CD4-positive, alpha-beta memory T cell (primary cell): ENCODE measurements at regions of chr20 and their contacts with region 1.

Region 1: DNA sequence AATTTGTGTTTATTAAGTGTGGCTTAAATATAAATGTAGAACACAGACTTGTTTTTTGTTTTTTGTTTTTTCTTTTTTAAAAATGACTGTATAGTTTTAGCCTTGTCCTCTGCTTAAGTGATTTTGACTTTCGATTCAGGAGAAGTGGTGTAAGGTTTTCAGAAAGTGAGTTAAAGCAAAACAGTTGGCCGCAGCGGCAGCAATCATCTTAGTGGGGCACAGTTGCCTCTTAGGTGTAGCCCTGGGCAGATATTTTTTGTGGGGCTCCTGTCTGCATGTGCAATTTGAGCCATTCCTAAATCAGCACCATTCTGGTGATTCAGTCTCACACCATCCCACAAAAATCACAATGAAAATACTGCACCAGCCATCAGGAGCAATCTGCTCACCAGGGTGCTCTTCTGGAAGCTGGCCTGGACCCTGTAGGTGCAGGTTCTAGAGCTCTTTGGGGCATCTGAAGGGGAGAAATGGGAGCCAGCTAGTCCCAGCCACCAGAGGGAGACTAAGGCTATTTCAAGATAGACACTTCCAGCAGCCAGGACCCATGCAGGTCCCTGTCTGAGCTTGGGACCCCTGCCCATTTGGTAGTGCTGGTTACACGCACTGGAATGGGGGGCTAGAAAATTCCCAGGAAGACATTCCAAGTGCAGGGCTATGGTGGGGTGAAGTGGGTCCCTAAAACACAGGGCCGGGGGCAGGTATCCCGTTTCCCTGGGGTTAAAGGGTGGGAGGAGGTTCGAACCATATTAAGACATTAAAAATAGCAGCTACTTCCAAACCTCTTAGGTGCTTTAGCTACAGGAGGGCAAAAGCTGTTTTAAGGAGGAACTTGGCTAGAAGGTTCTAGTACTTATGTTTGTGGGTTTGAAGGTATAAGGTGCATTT is 156.6 kb downstream of the NFATC2 start:
- DNase-seq: peak; percentile 29 to 63 (median 37)
- H3K4me3 ChIP-seq: no peak overlapping the region
- H3K4me3 Mint-ChIP-seq: peak overlapping the region in 4 of 8 donors; percentile 13 to 50 (median 38)
- H3K27ac ChIP-seq: peak overlapping the region; percentile 13
- H3K27ac Mint-ChIP-seq: peak overlapping the region; percentile 35 to 85 (median 77)
- H3K4me1 ChIP-seq: peaks cover 47% of the 10 kb centered on the region
- H3K4me1 Mint-ChIP-seq: peaks cover 24 to 50% (median 36%) of the 10 kb centered on the region in 4 donors
- H3K27me3 ChIP-seq: no peaks in the 10 kb centered on the region
- H3K27me3 Mint-ChIP-seq: no peaks in the 10 kb centered on the region

Region 2: GRCh38 chr20:51249215-51249614 is 136.7 kb before region 1 on chr20:
- CTCF ChIA-PET with region 1: no interaction called
- POLR2A ChIA-PET with region 1: no interaction called
- intact Hi-C with region 1: no loop called
- DNase-seq: no peak
- H3K4me3 ChIP-seq: no peak overlapping the region
- H3K4me3 Mint-ChIP-seq: no peak overlapping the region
- H3K27ac ChIP-seq: no peak overlapping the region
- H3K27ac Mint-ChIP-seq: no peak overlapping the region
- H3K4me1 ChIP-seq: no peaks in the 10 kb centered on the region
- H3K4me1 Mint-ChIP-seq: no peaks in the 10 kb centered on the region
- H3K27me3 ChIP-seq: no peaks in the 10 kb centered on the region
- H3K27me3 Mint-ChIP-seq: peaks cover 27 to 40% of the 10 kb centered on the region in 2 donors

Region 3: DNA sequence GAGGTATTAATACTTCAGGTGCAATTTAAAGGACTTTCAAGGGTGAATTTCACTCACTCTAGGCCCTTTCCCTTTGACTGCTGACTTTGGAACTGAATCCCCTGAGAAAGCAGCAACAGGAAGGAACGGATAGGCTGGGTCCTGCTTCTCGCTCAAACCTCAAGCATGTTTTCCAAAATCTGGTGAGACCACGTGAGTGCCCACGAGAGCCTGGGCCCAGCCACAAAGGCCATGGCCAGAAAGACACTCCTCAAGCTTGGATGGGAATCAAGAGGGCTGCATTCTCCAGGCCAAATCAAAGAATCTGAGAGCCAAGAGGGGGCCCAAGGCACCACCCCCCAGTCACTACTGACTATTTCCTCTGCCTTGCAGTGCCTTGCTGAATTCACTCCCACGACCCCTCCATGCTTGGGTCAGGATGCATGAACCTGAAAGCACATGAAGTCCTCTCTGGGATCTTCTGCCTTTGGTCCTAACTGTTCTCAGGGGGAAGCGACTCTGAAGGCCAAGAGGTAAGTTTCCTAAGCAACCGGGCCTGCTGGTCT is 10.5 kb after region 1 on chr20:
- CTCF ChIA-PET with region 1: interaction called, 38 read pairs
- POLR2A ChIA-PET with region 1: interaction called, 43 read pairs
- intact Hi-C with region 1: no loop called
- DNase-seq: no peak
- H3K4me3 ChIP-seq: no peak overlapping the region
- H3K4me3 Mint-ChIP-seq: no peak overlapping the region
- H3K27ac ChIP-seq: no peak overlapping the region
- H3K27ac Mint-ChIP-seq: peak overlapping the region in 4 of 7 donors; percentile 17 to 71 (median 43)
- H3K4me1 ChIP-seq: peaks cover 57% of the 10 kb centered on the region
- H3K4me1 Mint-ChIP-seq: peaks cover 37 to 63% (median 46%) of the 10 kb centered on the region in 4 donors
- H3K27me3 ChIP-seq: no peaks in the 10 kb centered on the region
- H3K27me3 Mint-ChIP-seq: no peaks in the 10 kb centered on the region

Region 4: DNA sequence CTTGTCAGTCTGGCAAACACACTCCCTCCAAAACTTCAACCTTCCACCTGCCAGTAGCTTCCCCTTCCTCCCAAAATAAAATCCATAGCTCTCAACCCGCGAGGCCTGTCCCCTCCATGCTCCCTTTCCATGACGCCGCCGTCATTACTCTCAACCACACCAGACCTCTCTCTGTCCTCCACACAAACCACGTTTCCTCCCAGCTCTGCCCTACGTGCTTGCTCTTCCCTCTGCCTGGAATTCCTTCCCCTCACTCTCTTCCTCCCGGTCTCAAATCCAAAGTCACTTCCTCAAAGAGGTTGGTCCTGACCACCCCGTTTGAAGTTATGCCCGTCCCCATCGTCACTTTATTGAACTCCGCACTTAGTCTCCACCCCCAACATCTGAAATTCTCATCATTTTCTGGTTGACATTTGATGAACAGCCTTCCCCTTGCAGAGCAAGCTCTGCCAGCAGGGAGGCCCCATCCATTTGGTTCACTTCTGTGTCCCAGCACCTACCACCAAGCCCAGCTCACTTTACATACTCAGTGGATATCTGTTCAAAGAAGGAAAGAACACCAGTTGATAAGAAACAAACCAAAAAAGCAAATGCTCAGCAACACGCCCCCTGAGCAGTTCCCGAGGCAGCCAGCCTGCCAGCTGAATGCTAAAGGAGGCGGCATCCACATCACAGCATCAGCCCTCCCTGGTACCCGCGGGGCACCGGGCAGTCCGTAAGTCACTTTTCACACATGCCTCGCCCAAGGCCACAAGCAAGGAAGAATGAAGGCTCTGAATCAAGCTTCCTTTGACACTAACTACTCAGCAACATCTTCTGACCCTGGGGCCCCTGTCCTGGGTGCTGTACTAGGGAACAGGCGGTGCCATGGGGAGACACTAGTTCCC is 31.6 kb after region 1 on chr20:
- CTCF ChIA-PET with region 1: interaction called, 54 read pairs
- POLR2A ChIA-PET with region 1: interaction called, 14 read pairs
- intact Hi-C with region 1: loop called (anchors 5 kb)
- DNase-seq: peak; percentile 34 to 73 (median 44)
- H3K4me3 ChIP-seq: no peak overlapping the region
- H3K4me3 Mint-ChIP-seq: peak overlapping the region in 7 of 8 donors; percentile 54 to 84 (median 73)
- H3K27ac ChIP-seq: peak overlapping the region; percentile 65
- H3K27ac Mint-ChIP-seq: peak overlapping the region; percentile 87 to 97 (median 95)
- H3K4me1 ChIP-seq: peaks cover 85% of the 10 kb centered on the region
- H3K4me1 Mint-ChIP-seq: peaks cover 52 to 96% (median 71%) of the 10 kb centered on the region in 4 donors
- H3K27me3 ChIP-seq: no peaks in the 10 kb centered on the region
- H3K27me3 Mint-ChIP-seq: no peaks in the 10 kb centered on the region

Region 5: DNA sequence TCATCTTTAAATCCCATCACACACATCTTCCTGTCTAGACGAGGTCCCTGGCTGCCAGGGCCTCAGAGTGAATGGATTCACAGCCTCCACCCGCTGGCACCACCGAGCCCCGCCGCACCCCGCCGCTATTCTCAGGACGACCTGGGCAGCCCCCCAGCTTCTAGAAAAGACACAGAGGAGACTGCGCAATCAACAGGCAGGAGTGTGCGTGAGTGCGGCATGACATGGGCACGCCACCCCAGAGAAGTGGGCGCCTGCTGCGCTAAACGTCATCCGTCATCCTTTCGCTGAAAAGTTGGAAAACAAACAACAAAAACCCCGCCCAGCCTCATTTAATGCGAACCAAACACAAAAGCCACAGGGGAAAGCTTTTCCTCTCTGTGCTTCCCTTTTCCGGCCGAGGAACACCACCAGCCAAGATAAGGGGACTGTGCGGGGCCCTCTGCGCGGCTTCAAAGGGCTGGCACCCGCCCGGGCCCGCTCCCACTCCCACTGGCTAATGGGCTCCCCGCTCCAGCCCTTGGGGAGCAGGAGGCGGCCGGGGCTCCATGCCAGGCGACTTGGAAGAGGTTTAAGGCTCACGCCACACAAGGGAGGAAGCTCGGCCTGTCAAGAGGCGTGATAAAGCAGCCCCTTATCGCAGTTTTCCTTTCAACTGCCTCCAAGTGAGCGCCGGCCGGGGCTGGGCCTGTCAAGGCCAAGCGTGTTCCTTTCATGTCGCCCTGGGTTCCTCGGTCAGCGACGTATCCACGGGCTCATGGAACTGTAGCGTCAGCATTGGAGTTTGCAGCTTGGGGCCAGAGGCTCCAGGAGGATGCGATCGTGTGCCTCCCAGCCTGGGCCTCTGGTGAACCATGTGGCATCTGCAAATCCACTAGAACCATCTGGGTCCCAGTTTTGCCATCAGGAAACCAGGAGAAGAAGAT is 106.5 kb after region 1 on chr20:
- CTCF ChIA-PET with region 1: interaction called, 16 read pairs
- POLR2A ChIA-PET with region 1: interaction called, 3 read pairs
- intact Hi-C with region 1: no loop called
- DNase-seq: no peak
- H3K4me3 ChIP-seq: no peak overlapping the region
- H3K4me3 Mint-ChIP-seq: peak overlapping the region in 5 of 8 donors; percentile 31 to 81 (median 35)
- H3K27ac ChIP-seq: peak overlapping the region; percentile 51
- H3K27ac Mint-ChIP-seq: peak overlapping the region in 6 of 7 donors; percentile 70 to 99 (median 81)
- H3K4me1 ChIP-seq: peaks cover 75% of the 10 kb centered on the region
- H3K4me1 Mint-ChIP-seq: peaks cover 66 to 97% (median 85%) of the 10 kb centered on the region in 4 donors
- H3K27me3 ChIP-seq: no peaks in the 10 kb centered on the region
- H3K27me3 Mint-ChIP-seq: no peaks in the 10 kb centered on the region

Region 6: GRCh38 chr20:51541189-51542032 is 155.5 kb after region 1 on chr20:
- CTCF ChIA-PET with region 1: interaction called, 35 read pairs
- POLR2A ChIA-PET with region 1: interaction called, 16 read pairs
- intact Hi-C with region 1: loop called (anchors 1 kb)
- DNase-seq: peak; percentile 88 to 98 (median 91)
- H3K4me3 ChIP-seq: peak overlapping the region; percentile 72 to 85
- H3K4me3 Mint-ChIP-seq: peak overlapping the region; percentile 95 to 99 (median 98)
- H3K27ac ChIP-seq: peak overlapping the region; percentile 98
- H3K27ac Mint-ChIP-seq: peak overlapping the region; percentile 97 to 100 (median 98)
- H3K4me1 ChIP-seq: peaks cover 55% of the 10 kb centered on the region
- H3K4me1 Mint-ChIP-seq: peaks cover 43 to 65% (median 52%) of the 10 kb centered on the region in 4 donors
- H3K27me3 ChIP-seq: no peaks in the 10 kb centered on the region
- H3K27me3 Mint-ChIP-seq: no peaks in the 10 kb centered on the region

Region 7: DNA sequence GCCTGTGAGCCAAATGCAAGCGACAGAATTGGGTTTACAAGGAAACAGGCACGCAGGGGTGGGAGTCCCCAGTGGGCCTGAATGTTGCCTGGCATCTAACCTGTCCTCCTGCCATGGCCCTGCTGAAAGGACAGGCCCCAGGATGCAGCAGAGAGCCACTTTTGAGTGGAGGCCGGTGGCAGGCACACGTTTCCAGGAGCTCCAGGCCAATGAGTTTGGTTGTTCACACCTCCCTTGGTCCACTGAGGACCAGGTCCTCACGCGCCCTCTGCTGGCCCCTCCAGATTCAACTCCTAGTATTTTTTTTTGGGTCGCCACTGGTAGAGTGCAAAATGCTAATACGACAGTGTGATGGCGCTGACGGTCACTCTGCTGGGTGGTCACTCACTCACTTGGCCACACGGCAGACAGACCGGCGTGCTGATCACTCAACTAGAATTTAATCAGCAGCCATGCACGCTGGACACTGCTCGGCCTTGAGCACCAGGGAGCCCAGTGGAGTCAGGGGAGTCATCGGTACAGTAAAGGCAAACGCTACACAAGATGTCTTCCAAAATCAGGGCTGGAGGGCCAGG is 238.4 kb after region 1 on chr20:
- CTCF ChIA-PET with region 1: interaction called, 16 read pairs
- POLR2A ChIA-PET with region 1: interaction called, 3 read pairs
- intact Hi-C with region 1: no loop called
- DNase-seq: peak; percentile 47 to 56 (median 54)
- H3K4me3 ChIP-seq: no peak overlapping the region
- H3K4me3 Mint-ChIP-seq: no peak overlapping the region
- H3K27ac ChIP-seq: no peak overlapping the region
- H3K27ac Mint-ChIP-seq: no peak overlapping the region
- H3K4me1 ChIP-seq: no peaks in the 10 kb centered on the region
- H3K4me1 Mint-ChIP-seq: peaks cover 2 to 11% (median 5%) of the 10 kb centered on the region in 4 donors
- H3K27me3 ChIP-seq: no peaks in the 10 kb centered on the region
- H3K27me3 Mint-ChIP-seq: peaks cover 2 to 3% of the 10 kb centered on the region in 2 donors